Left colon (tissue), 2 donors: ENCODE measurements at regions of chr1 and their contacts with region 1.

Region 1: DNA sequence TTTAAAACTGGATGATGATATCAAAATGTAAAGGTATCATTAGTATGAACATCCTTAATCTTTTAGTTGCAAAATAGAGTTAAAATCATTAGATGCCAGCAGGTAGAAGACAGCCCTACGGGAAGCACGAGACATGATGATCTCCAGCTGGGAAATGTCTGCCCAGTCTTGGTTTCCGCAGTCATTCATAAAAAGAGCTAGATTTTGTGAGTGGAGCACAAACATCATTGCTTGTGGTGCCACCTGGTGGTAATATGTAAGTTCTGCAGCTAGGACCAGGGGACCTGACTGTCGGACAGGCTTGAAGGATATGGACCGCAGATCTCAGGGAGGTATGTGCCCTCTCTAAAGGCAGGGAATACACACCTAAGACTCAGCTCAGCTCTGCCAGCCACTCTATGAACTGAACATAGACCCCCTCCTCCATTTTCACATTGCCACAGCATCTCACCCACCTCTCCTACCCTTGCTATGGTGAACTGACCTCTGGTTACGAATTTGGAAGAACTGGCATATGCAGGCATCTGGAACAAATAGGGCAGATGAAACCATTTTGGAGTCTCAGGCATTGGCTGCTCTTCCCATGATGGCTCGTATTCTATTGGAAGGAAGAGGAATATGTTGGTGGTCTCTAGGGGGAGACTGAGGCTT is 9.2 kb downstream of the FCMR start:
- DNase-seq: peak; percentile 60
- ATAC-seq: peak; percentile 57

Region 2: DNA sequence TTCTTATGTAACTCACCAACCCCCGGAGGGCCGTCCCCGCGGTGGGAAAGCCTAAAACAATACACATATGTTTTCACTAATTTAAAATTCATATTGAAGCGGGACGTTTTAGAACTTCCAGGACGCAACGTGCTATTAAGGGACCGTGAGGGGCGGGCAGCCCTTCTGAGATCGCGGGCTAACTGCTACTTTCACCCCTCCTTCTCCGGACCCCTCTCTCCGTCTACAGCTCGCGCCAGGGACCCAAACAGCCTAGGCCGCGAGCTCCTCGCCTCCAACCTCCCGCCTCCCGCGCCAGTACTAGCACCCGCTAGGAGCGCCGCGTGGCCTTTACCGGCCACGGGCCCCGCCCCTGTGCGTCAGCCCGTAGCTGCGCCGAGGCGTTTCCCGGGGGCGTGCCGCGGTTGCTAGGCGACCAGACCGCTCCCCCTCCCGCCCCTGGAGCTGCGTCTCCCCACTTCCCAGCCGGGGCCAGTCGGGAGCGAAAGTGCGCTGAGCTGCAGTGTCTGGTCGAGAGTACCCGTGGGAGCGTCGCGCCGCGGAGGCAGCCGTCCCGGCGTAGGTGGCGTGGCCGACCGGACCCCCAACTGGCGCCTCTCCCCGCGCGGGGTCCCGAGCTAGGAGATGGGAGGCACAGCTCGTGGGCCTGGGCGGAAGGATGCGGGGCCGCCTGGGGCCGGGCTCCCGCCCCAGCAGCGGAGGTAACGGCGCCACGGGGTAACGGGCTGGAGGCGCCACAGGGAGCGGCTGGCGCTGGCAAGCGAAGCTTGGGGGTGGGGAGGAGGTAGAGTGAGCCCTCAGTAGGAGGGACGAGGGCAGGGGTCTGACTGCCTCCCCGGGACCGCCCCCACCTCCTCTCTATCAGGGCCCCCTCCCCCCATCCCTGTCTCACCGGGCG is 277.2 kb before region 1 on chr1 and contains the start of gene DYRK3:
- intact Hi-C with region 1: loop called in 1 of 2 experiments (anchors 10 kb)
- DNase-seq: peak; percentile 94 to 96
- ATAC-seq: peak; percentile 100
- total RNA-seq, gene DYRK3: 0.58 to 1.2 TPM

Region 3: DNA sequence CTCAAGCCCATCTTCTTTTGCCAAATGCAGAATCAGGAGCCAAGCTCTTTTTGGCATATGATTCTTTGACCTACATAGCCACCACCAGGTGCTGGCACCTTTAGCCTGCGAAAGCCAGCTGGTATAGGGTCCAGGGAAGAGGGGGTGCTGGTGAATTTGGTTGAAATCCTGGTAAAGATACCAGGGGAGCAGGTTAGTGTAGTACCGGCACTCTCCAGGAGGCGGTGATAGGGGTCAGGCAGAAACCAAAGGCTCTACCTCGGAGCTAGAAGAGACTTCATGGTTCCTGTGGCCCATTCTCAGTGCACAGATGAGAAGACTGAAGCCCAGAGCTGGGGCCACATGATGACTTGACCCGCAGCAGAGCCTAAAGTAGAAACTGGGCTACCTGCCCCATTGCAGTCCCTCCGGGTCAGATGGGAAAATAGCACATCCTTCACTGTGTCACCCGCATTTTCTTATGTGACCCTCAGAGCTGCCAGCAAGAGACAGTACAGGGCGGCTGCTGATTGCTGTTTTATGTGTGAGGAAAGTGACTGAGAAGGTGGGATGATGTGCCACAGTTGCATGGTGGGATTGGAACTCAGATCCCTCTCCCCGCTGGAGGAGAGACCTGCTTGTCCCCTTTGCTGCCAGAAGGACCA is 177.9 kb before region 1 on chr1:
- intact Hi-C with region 1: loop called in 1 of 2 experiments (anchors 10 kb)
- DNase-seq: peak in 1 of 2 donors; percentile 72
- ATAC-seq: peak; percentile 60